Calu3 (cell line): ENCODE measurements at regions of chr2 and their contacts with region 1.

Region 1: DNA sequence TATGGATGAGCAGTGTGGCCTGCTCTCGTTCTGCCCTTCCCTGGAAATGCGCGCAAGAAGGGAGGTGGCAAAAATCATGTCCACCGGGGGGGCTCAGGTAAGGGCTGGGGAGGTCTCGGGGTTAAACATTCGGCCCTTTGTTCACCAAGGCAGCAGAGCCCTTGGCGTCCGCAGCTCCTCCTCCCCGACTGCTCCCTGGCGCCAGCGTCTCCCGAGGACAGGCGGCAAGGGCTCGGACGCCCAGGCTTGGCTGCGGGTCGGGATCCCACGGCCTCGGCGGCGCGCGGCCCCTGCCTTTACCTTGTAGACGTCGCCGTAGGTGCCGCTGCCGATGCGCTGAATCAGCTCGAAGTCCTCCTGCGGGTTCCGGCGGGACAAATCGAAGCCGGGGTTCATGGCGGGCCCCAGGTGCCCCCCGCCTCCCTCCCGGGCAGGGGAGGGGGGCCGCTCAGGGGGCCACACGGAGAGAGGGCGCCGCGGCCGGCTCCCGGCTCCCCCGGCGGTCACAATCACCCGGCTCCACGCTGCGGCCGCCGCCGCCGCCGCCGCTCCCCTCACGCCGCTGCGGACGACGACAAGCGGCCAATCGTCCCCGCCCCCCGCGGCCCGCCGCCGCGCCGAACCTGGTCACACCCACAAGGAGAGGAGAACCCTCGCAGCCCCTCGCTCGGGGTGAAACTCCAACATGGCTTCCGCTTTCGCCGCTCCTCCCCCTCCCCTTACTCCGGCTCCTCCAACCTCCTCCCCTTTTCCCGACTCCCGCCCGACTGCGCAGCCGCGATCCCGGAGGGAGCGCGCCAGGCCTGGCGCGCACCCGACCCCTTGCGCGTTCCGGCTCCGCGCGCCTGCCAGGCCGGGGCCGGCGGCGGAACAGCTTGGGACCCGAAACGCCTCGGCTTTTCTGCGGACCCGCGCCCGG is at the start of gene MAP4K3:
- DNase-seq: peak; percentile 96
- H3K4me3 Mint-ChIP-seq: peak within 1 kb of the TSS; percentile 89
- H3K27ac Mint-ChIP-seq: peak within 1 kb of the TSS; percentile 96
- H3K4me1 Mint-ChIP-seq: peaks cover 49% of the 10 kb centered on the region
- H3K27me3 Mint-ChIP-seq: no peaks in the 10 kb centered on the region
- CTCF ChIP-seq: no peak
- total RNA-seq, gene MAP4K3: 30.7 and 40.4 TPM in 2 replicates

Region 2: DNA sequence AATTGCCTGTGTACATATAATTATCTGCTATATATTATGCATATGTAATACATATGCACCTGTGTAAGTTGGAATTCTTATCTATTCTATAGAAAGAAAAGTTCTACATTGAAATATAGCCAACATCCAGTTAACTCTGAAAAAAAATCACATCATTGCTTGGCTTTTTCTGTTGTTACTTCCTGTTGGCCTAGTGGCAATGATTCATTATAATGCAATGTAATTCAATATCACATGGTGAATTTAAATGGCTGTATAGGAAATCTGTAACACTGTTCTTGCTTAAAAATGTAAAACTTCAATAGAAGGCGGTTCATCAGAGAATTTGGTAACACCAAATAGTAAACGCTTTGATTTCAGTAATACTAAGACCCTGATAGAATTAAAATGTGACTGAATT is 44.8 kb after region 1 on chr2:
- CTCF ChIA-PET with region 1: no interaction called
- intact Hi-C with region 1: loop called (anchors 5 kb)
- DNase-seq: no peak
- H3K4me3 Mint-ChIP-seq: no peak overlapping the region
- H3K27ac Mint-ChIP-seq: no peak overlapping the region
- H3K4me1 Mint-ChIP-seq: peaks cover 28% of the 10 kb centered on the region
- H3K27me3 Mint-ChIP-seq: no peaks in the 10 kb centered on the region
- CTCF ChIP-seq: no peak

Region 3: DNA sequence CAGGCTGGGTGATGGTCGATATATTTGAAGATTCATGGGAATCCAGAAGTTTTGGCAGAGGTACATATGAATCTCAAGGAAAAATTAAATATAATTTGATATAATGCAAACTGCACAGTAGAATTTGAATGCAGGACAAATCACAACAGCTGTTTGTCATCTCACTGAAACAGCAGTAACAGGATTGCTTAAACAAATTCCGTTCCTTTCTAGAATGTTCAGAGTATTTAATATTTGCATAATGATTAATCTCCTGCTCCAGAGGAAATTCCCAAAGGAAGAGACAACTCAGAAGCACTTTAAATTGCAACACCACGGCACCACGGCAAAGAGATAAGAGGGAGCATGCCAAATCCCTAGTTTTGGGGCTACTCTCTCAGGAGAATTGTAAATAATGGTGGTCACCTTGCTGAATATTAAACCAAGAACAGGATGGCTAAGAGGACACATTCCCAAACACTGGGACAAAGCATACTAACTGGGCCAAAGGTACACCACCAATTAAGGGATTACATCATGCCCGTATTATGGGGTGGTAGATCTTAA is 68.0 kb after region 1 on chr2:
- CTCF ChIA-PET with region 1: no interaction called
- intact Hi-C with region 1: loop called (anchors 2 kb)
- DNase-seq: no peak
- H3K4me3 Mint-ChIP-seq: peak overlapping the region; percentile 49
- H3K27ac Mint-ChIP-seq: peak overlapping the region; percentile 76
- H3K4me1 Mint-ChIP-seq: peaks cover 57% of the 10 kb centered on the region
- H3K27me3 Mint-ChIP-seq: no peaks in the 10 kb centered on the region
- CTCF ChIP-seq: no peak